Transverse colon (tissue), 4 donors: ENCODE measurements at regions of chr11 and their contacts with region 1.

Region 1: GRCh38 chr11:7098235-7098832 is 9.5 kb downstream of the RBMXL2 start:
- DNase-seq: no peak
- H3K4me3 ChIP-seq: no peak overlapping the region
- H3K27ac ChIP-seq: no peak overlapping the region
- H3K4me1 ChIP-seq: no peaks in the 10 kb centered on the region
- H3K27me3 ChIP-seq: no peaks in the 10 kb centered on the region
- CTCF ChIP-seq: peak; percentile 49 to 56 (median 50)
- EP300 ChIP-seq: no peak
- POLR2A ChIP-seq: no peak

Region 2: GRCh38 chr11:6931146-6931713 is 167.1 kb before region 1 on chr11:
- in situ Hi-C with region 1: no loop called
- intact Hi-C with region 1: no loop called
- DNase-seq: no peak
- H3K4me3 ChIP-seq: no peak overlapping the region
- H3K27ac ChIP-seq: no peak overlapping the region
- H3K4me1 ChIP-seq: peaks cover 4 to 9% (median 7%) of the 10 kb centered on the region in 4 donors
- H3K27me3 ChIP-seq: no peaks in the 10 kb centered on the region
- CTCF ChIP-seq: no peak
- EP300 ChIP-seq: no peak
- POLR2A ChIP-seq: no peak

Region 3: DNA sequence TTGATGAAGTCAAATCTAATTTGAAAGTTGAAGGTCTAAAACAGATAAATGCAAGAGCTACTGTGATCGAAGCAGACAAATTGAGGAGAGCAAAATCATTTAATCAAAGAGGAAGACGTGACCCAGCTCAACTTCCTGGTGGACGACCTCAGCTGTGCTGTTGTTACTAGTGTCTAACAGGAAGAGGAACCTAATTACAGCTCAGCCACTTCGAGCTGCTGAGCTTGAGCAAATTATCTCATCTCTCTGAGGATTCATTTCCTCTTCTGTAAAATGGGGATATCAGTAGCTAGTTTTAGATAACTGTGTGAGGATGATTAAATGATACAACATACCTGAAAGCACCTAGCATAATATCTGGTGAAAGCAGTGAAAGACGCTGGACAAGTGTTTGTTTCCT is 338.3 kb after region 1 on chr11:
- in situ Hi-C with region 1: loop called in 3 of 4 experiments (anchors 10 to 25 kb)
- intact Hi-C with region 1: no loop called
- DNase-seq: no peak
- H3K4me3 ChIP-seq: no peak overlapping the region
- H3K27ac ChIP-seq: no peak overlapping the region
- H3K4me1 ChIP-seq: peaks cover 0 to 4% (median 0%) of the 10 kb centered on the region in 4 donors
- H3K27me3 ChIP-seq: no peaks in the 10 kb centered on the region
- CTCF ChIP-seq: no peak
- EP300 ChIP-seq: no peak
- POLR2A ChIP-seq: no peak

Region 4: GRCh38 chr11:7442588-7443215 is 344.4 kb after region 1 on chr11:
- in situ Hi-C with region 1: loop called in 3 of 4 experiments (anchors 10 to 25 kb)
- intact Hi-C with region 1: no loop called
- DNase-seq: peak; percentile 75
- H3K4me3 ChIP-seq: no peak overlapping the region
- H3K27ac ChIP-seq: no peak overlapping the region
- H3K4me1 ChIP-seq: no peaks in the 10 kb centered on the region
- H3K27me3 ChIP-seq: no peaks in the 10 kb centered on the region
- CTCF ChIP-seq: peak; percentile 68 to 88 (median 84)
- EP300 ChIP-seq: no peak
- POLR2A ChIP-seq: no peak

Region 5: DNA sequence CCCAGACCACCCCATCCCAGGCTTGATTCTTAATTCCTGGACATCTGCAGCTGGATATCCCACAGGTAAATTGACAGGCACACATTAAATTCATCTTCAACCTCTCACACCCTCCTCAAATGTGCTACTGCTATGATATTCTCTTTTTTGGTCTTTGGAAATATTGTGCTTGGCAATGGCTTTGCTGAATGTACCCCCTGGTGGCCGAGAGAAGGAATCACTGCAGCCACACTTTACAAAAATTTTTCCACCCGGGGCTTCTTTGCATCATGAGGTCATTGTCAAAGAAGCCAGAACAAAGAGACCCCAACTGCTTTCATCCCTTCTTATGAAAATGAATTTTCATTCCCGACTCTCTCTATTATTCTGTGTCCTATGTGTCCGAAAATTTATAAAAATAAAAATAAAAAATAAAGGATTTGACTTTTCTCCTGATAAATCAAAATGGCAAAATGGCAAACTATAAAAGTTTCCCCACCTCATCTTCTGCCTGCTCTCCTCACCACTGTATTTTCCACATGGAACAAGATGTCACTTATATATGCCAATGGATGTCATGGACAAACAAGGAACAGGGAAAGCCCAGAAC is 590.0 kb after region 1 on chr11:
- in situ Hi-C with region 1: loop called (anchors 10 to 25 kb)
- intact Hi-C with region 1: no loop called
- DNase-seq: no peak
- H3K4me3 ChIP-seq: no peak overlapping the region
- H3K27ac ChIP-seq: no peak overlapping the region
- H3K4me1 ChIP-seq: no peaks in the 10 kb centered on the region
- H3K27me3 ChIP-seq: peaks cover 14% of the 10 kb centered on the region
- CTCF ChIP-seq: peak; percentile 64 to 81 (median 76)
- EP300 ChIP-seq: no peak
- POLR2A ChIP-seq: no peak